Panc1 (cell line): ENCODE measurements at regions of chr19 and their contacts with region 1.

Region 1: GRCh38 chr19:54115109-54116063 is at the starts of genes PRPF31 and TFPT:
- DNase-seq: peak; percentile 97
- ATAC-seq: peak; percentile 93
- H3K4me3 ChIP-seq: peak within 1 kb of the TSS; percentile 51 to 75
- H3K27ac ChIP-seq: peak within 1 kb of the TSS; percentile 93
- H3K4me1 ChIP-seq: peaks cover 12% of the 10 kb centered on the region; the same call in 1 of the 2 replicates
- H3K27me3 ChIP-seq: no peaks in the 10 kb centered on the region
- CTCF ChIP-seq: no peak
- total RNA-seq, gene PRPF31: 117 TPM
- total RNA-seq, gene TFPT: 45.4 TPM

Region 2: GRCh38 chr19:54017261-54017660 is 98.1 kb before region 1 on chr19:
- CTCF ChIA-PET with region 1: no interaction called
- POLR2A ChIA-PET with region 1: interaction called, 16 read pairs
- in situ Hi-C with region 1: no loop called
- intact Hi-C with region 1: no loop called
- DNase-seq: no peak
- ATAC-seq: peak; percentile 36; the same call in 1 of the 2 replicates
- H3K4me3 ChIP-seq: no peak overlapping the region
- H3K27ac ChIP-seq: peak overlapping the region; percentile 96
- H3K4me1 ChIP-seq: peaks cover 18% of the 10 kb centered on the region
- H3K27me3 ChIP-seq: no peaks in the 10 kb centered on the region
- CTCF ChIP-seq: no peak

Region 3: DNA sequence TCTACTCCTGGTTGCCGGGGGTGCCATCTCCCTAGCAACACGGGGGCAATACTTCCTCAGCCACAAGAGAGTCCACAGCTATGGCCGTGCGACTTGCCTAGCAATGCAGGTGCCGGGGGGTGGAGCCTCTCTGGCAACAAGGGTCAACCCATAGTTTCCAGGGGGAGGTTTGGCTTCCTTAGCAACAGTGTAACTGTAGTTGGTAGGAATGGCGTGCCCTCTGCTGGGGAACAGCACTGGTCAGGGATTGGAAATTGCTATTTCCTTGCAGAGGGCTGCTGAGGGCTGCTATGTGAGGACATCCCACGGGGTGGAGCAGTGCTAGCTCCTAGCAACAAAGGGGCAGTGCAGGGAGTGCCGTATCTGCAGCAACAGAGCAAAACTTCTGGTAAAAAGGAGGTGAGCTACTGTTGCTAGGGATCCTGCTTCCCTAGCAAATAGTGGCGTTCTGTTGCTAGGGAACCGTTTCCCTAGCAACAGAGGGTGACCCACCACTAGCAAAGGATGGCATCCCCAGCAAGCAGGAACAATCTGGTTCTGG is 64.6 kb after region 1 on chr19:
- CTCF ChIA-PET with region 1: no interaction called
- POLR2A ChIA-PET with region 1: no interaction called
- in situ Hi-C with region 1: no loop called
- intact Hi-C with region 1: no loop called
- DNase-seq: no peak
- ATAC-seq: peak; percentile 72
- H3K4me3 ChIP-seq: no peak overlapping the region
- H3K27ac ChIP-seq: no peak overlapping the region
- H3K4me1 ChIP-seq: no peaks in the 10 kb centered on the region
- H3K27me3 ChIP-seq: no peaks in the 10 kb centered on the region
- CTCF ChIP-seq: no peak

Region 4: DNA sequence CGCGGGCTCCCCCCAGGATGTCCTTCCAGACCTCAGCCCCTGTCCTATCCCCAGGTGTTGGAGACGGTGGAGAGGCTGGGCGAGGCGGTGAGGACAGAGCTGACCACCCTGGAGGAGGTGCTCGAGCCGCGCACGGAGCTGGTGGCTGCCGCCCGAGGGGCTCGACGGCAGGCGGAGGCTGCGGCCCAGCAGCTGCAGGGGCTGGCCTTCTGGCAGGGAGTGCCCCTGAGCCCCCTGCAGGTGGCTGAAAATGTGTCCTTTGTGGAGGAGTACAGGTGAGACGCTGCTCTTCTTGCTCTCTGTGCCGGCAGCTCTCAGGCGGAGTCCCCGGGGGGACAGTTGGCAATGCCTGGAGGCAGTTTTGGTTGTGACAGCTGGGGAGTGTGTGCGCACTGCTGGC is 306.8 kb after region 1 on chr19:
- CTCF ChIA-PET with region 1: no interaction called
- POLR2A ChIA-PET with region 1: interaction called, 13 read pairs
- in situ Hi-C with region 1: no loop called
- intact Hi-C with region 1: no loop called
- DNase-seq: no peak
- ATAC-seq: no peak
- H3K4me3 ChIP-seq: no peak overlapping the region
- H3K27ac ChIP-seq: no peak overlapping the region
- H3K4me1 ChIP-seq: peaks cover 15% of the 10 kb centered on the region
- H3K27me3 ChIP-seq: no peaks in the 10 kb centered on the region
- CTCF ChIP-seq: no peak